ENCODE measurements at regions of chr2 and their contacts with region 1.

Region 1: GRCh38 chr2:74751981-74752851 is 81.7 kb upstream of the HK2 start:
- DNase-seq: no peak

Region 2: DNA sequence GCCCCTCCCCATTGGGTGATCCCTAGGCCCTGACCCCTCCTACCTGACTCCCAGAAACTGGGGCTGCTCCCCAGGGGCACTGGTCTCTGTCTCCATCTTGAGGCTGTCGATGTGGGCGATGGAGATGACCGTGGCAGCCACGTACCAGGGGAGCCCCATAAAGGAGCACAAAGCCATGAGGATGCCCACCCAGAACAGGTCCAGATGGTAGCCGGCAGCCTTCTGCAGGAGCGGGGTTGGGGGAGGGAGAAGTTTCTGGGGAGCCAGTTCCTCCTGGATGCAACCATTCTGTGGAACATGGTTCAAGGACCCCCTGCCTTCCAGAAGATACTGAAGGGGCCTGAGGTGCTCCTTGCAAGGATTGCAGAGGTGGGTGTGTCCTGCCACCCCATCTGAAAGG is 519.8 kb before region 1 on chr2:
- intact Hi-C with region 1: loop called in 1 of 2 experiments (anchors 5 kb)
- DNase-seq: no peak